Aorta (tissue), 5 donors: ENCODE measurements at regions of chr18 and their contacts with region 1.

Region 1: GRCh38 chr18:44594799-44595467 is 85.8 kb upstream of the SETBP1 start:
- DNase-seq: no peak
- ATAC-seq: peak; percentile 73
- H3K4me3 ChIP-seq: no peak overlapping the region
- H3K27ac ChIP-seq: no peak overlapping the region
- H3K4me1 ChIP-seq: peaks cover 1 to 18% of the 10 kb centered on the region in 2 donors
- H3K27me3 ChIP-seq: no peaks in the 10 kb centered on the region

Region 2: DNA sequence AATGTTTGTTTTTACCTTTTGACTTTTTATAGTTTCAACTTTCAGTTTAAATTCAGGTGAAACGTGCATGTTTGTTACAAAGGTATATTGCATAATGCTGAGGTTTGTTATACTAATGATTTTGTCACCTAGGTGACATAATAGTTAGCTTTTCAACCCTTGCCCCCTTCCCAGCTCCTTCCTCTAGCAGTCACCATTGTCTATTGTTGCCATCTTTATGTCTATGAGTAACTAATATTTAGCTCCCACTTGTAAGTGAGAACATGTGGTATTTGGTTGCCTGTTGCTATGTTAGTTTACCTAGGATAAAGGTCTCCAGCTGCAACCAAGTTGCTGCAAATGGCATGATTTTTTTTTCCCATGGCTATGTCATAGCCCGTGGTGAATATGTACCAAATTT is 236.5 kb before region 1 on chr18:
- intact Hi-C with region 1: loop called in 1 of 2 experiments (anchors 10 kb)
- DNase-seq: no peak
- ATAC-seq: no peak
- H3K4me3 ChIP-seq: no peak overlapping the region
- H3K27ac ChIP-seq: no peak overlapping the region
- H3K4me1 ChIP-seq: no peaks in the 10 kb centered on the region
- H3K27me3 ChIP-seq: no peaks in the 10 kb centered on the region

Region 3: GRCh38 chr18:44537521-44537920 is 57.4 kb before region 1 on chr18:
- intact Hi-C with region 1: loop called in 1 of 2 experiments (anchors 5 kb)
- DNase-seq: peak; percentile 69 to 77
- ATAC-seq: peak; percentile 70
- H3K4me3 ChIP-seq: no peak overlapping the region
- H3K27ac ChIP-seq: no peak overlapping the region
- H3K4me1 ChIP-seq: peaks cover 0 to 6% of the 10 kb centered on the region in 2 donors
- H3K27me3 ChIP-seq: no peaks in the 10 kb centered on the region

Region 4: DNA sequence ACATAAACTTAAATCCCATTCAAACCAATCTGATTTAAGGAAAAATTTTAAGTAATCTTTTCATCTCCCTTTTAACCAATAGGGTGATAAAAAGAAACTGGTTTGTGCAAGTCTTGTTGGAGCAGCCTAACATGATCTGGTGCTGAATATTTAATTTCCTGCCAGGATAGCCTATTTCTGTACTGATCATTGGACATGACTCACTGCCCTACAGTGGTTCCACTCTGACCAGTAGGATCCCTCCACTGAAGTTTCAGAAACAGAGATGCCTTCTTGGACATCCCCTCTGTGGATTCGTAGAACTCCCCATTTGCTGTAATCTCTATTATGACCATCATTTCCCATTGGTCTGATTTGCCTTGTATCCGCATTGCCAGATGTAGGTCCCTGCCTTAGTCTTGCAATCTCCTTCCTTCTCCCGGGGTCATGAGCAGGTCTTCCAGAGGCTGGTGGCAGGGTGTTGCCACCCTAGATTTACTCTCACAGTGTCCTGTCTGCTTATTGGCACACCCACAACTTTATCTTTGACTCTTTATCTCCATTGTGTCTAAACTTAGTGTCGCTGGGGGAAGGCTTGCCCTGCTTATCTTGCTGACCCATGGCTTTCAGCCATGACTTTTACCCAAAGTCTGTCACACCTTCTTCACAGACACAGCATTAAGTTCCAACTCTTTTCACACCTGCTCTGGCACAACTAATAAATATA is 73.5 kb after region 1 on chr18:
- intact Hi-C with region 1: no loop called
- DNase-seq: no peak
- ATAC-seq: no peak
- H3K4me3 ChIP-seq: no peak overlapping the region
- H3K27ac ChIP-seq: no peak overlapping the region
- H3K4me1 ChIP-seq: no peaks in the 10 kb centered on the region
- H3K27me3 ChIP-seq: no peaks in the 10 kb centered on the region

Region 5: DNA sequence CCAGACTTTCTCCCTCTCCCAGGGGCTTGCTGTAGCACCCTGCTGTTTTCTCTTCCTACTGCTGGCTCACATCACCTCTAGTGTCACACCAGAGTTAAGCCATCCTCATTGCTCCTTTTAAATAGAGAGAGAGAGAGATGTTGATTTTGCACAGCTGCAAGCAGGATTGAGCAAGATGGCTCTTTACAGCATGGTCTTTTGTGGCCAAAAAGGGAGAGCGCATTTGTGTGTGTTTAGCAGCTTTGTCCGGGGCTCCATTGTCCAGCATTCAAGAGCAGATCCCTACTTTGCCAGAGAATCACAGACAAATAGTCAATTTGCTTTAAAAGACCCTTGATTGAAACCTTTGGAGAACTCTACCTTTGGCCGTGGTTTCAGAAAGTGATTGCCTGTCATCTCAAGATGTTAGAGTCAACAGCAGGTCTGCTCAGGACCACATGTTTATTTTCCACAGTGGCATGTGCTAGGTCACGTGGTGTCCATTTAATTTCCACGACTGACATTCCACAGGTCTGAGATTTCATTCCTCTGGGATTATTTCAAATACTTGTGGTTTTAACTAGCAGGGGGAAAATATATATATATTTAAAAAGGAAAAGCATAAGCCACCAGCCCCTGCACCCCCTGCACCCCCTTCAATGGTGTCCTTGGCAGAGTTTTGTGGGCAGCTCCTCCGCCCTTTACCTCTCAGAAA is 660.4 kb after region 1 on chr18:
- intact Hi-C with region 1: loop called in 1 of 2 experiments (anchors 10 kb)
- DNase-seq: no peak
- ATAC-seq: peak; percentile 47
- H3K4me3 ChIP-seq: no peak overlapping the region
- H3K27ac ChIP-seq: peak overlapping the region in 1 of 2 donors; percentile 88
- H3K4me1 ChIP-seq: peaks cover 4 to 8% of the 10 kb centered on the region in 2 donors
- H3K27me3 ChIP-seq: no peaks in the 10 kb centered on the region